ENCODE measurements at regions of chr13 and their contacts with region 1.

Region 1: DNA sequence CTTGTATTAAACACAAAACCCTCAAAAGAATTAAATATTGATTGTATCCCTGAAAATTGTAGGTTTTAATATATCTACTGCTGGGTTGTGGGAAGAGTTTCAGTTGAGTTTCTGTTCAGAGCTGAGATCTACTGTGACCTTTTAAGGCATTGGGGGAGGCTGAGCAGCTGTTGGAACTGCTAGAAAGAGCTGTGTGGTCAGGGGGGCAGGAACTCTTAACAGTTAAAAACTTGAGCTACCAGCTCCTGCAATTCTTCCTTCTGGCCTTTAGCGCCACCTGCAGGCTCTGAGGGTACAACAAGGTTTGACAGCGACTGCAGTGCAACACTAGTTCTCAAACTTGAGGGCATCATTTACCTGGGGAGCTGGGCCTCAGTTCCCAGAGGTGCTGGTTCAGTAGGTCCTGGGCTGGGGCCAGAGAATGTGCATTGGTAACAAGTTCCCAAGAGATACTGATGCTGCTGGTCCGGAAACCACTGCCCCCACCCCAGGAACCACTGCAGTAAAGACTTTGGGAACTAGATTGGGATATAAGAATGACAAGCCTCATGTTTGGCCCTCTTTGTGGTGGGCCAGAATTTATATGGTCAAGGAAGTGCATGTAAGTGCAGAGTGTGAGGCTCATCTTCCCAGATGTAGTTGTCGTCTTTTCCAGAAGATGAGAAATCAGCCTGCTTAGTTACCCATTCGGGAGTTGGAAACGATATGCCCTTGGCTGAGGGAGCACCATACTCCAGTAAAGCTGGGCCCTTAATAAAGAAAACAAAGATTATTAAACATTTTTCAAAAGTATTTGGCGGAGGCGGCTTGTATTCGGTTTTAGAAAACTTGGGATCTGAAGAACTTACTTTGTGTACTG is 2.6 kb downstream of the RNASEH2B start:
- DNase-seq: peak; percentile 95
- H3K4me3 Mint-ChIP-seq: peak overlapping the region; percentile 88
- H3K27ac Mint-ChIP-seq: peak overlapping the region; percentile 89
- H3K4me1 Mint-ChIP-seq: peaks cover 61% of the 10 kb centered on the region
- H3K27me3 Mint-ChIP-seq: no peaks in the 10 kb centered on the region

Region 2: GRCh38 chr13:49996951-49997895 is 914.9 kb before region 1 on chr13 and contains the start of gene TRIM13:
- CTCF ChIA-PET with region 1: interaction called, 47 read pairs
- POLR2A ChIA-PET with region 1: interaction called, 45 read pairs
- DNase-seq: peak; percentile 86
- H3K4me3 Mint-ChIP-seq: peak within 1 kb of the TSS; percentile 75
- H3K27ac Mint-ChIP-seq: peak within 1 kb of the TSS; percentile 85
- H3K4me1 Mint-ChIP-seq: peaks cover 37% of the 10 kb centered on the region
- H3K27me3 Mint-ChIP-seq: no peaks in the 10 kb centered on the region
- total RNA-seq, gene TRIM13: 13.2 to 17.4 TPM

Region 3: GRCh38 chr13:50893211-50893852 is 18.8 kb before region 1 on chr13:
- CTCF ChIA-PET with region 1: interaction called, 131 read pairs
- POLR2A ChIA-PET with region 1: interaction called, 247 read pairs
- DNase-seq: peak; percentile 45
- H3K4me3 Mint-ChIP-seq: peak overlapping the region; percentile 69
- H3K27ac Mint-ChIP-seq: peak overlapping the region; percentile 96
- H3K4me1 Mint-ChIP-seq: peaks cover 47% of the 10 kb centered on the region
- H3K27me3 Mint-ChIP-seq: peaks cover 2% of the 10 kb centered on the region

Region 4: DNA sequence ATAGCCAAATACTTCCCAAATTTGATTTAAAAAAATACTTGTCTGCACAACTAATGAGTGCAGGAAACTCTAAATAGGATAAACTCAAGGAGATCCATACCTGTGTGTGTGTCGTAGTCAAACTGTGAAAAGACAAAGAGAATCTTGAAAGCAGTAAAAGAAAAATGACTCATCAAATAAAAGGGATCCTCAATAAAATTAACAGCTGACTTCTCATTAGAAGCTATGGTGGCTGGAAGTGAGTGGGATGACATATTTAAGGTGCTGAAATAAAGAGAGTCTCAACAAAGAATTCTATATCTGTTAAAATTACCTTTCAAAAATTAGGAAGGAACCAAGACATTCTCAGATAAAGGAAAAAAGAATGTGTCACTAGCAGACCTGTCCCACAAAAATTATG is 11.1 kb after region 1 on chr13:
- CTCF ChIA-PET with region 1: interaction called, 18 read pairs
- POLR2A ChIA-PET with region 1: interaction called, 3 read pairs
- DNase-seq: no peak
- H3K4me3 Mint-ChIP-seq: no peak overlapping the region
- H3K27ac Mint-ChIP-seq: no peak overlapping the region
- H3K4me1 Mint-ChIP-seq: peaks cover 3% of the 10 kb centered on the region
- H3K27me3 Mint-ChIP-seq: no peaks in the 10 kb centered on the region

Measured in activated CD4-positive, alpha-beta memory T cell treated with anti-CD3 and anti-CD28 coated beads, Interleukin-2, amount 10 ng/mL, durations not matched to agents 7 days and 5 days (primary cell).